Endothelial cell of umbilical vein (primary cell): ENCODE measurements at regions of chr15 and their contacts with region 1.

Region 1: DNA sequence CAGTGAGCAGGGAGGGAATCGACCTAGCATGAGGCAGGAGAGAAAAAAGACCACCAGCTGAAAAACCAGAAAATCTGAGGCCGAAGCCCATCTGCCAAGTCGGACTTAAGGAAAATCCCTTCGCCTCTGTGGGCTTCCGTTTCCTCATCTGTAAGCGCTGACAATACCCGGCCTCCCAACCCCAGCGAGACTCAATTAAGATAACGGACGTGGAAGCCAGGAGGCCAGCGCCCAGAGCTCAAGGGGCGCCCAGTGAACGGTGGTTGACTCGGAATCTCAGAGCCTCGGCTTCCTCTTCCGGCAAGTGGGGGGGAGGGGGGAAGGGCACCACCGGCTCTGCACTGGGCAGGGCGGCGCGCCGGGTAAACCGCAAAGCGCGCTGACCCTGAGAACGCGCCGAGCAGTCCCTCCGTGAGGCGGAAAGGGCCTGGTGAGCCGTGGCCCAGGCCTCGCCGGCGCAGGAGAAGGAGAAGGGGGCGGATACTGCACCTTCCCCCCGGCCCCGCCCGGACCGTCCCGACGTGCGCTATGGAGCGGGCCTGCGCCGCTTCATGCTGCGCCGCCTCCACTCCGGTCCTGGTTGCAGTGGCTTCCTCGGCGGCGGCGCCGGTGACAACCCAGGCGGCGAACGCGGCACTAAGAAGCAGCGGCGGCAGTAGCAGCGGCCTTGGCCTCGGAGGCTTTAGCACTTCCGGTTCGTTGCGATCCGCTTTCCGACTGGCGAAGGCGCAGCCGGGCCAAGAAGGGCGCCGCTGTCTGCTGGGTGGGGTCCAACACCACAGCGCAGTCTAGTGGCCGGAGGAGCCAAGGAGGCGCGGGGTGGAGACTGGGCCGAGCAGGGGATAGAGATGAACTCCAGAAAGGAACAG is at the start of gene DPP8:
- DNase-seq: peak; percentile 92
- H3K4me3 ChIP-seq: peak within 1 kb of the TSS; percentile 67 to 96 (median 92)
- H3K27ac ChIP-seq: peak within 1 kb of the TSS; percentile 70
- H3K4me1 ChIP-seq: peaks cover 19% of the 10 kb centered on the region
- H3K27me3 ChIP-seq: no peaks in the 10 kb centered on the region
- CTCF ChIP-seq: peak; percentile 98
- POLR2A ChIP-seq: peak; percentile 78
- total RNA-seq, gene DPP8: 34.2 and 35.3 TPM in 2 replicates

Region 2: GRCh38 chr15:65156692-65157091 is 360.5 kb before region 1 on chr15:
- CTCF ChIA-PET with region 1: no interaction called
- POLR2A ChIA-PET with region 1: no interaction called
- dilution Hi-C with region 1: no loop called
- intact Hi-C with region 1: no loop called
- DNase-seq: no peak
- H3K4me3 ChIP-seq: no peak overlapping the region
- H3K27ac ChIP-seq: no peak overlapping the region
- H3K4me1 ChIP-seq: no peaks in the 10 kb centered on the region
- H3K27me3 ChIP-seq: no peaks in the 10 kb centered on the region
- CTCF ChIP-seq: no peak
- POLR2A ChIP-seq: no peak

Region 3: DNA sequence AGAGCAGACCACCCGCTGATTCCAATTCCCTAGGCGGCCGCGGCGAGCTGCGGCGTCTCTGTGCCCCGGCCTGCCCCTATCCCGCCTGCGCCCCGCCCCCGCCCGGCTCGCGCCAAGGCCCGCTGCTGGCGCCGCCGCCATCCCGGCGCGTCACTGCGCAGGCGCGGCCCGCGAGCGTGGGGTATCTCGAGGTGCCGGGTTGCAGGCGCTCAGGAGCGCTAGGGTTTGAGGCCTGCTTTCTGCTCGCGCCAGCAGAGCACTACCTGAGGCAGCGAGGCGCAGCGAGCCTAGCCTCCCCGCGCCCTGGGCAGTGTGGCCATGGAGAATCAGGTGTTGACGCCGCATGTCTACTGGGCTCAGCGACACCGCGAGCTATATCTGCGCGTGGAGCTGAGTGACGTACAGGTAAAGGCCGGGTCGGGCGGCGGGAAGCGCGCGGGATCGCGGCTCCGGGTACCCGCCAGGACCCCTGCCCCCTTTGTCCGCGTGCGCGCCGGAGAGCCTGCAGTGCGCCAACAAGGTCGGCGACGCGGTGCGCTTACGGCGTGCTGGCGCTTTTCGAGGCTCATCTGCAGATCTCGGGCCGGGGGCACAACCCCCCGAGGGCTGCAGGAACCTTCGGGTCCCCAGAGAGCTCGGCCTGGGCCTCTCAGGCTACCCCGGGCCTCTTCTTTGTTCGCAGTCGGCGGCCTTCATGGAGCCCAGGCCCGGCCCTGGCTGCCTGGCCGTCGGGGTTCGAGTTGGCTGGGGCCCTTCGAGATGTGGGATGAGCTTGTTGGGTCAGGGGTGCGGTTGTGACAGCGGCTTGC is 13.3 kb after region 1 on chr15 and contains the start of gene HACD3:
- CTCF ChIA-PET with region 1: interaction called, 9 read pairs
- POLR2A ChIA-PET with region 1: interaction called, 11 read pairs
- dilution Hi-C with region 1: no loop called
- intact Hi-C with region 1: loop called (anchors 1 kb)
- DNase-seq: peak; percentile 84
- H3K4me3 ChIP-seq: peak within 1 kb of the TSS; percentile 54 to 83 (median 80)
- H3K27ac ChIP-seq: peak within 1 kb of the TSS; percentile 20
- H3K4me1 ChIP-seq: peaks cover 16% of the 10 kb centered on the region
- H3K27me3 ChIP-seq: no peaks in the 10 kb centered on the region
- CTCF ChIP-seq: no peak
- POLR2A ChIP-seq: peak; percentile 73
- total RNA-seq, gene HACD3: 61.1 and 61.9 TPM in 2 replicates

Region 4: GRCh38 chr15:65576664-65577063 is 59.4 kb after region 1 on chr15:
- CTCF ChIA-PET with region 1: interaction called, 6 read pairs
- POLR2A ChIA-PET with region 1: interaction called, 5 read pairs
- dilution Hi-C with region 1: no loop called
- intact Hi-C with region 1: loop called (anchors 1 kb)
- DNase-seq: peak; percentile 70
- H3K4me3 ChIP-seq: no peak overlapping the region
- H3K27ac ChIP-seq: peak overlapping the region; percentile 43
- H3K4me1 ChIP-seq: peaks cover 29% of the 10 kb centered on the region
- H3K27me3 ChIP-seq: no peaks in the 10 kb centered on the region
- CTCF ChIP-seq: no peak
- POLR2A ChIP-seq: no peak

Region 5: GRCh38 chr15:65610871-65611718 is 93.9 kb after region 1 on chr15 and contains the start of gene INTS14:
- CTCF ChIA-PET with region 1: no interaction called
- POLR2A ChIA-PET with region 1: no interaction called
- dilution Hi-C with region 1: no loop called
- intact Hi-C with region 1: loop called (anchors 2 kb)
- DNase-seq: peak; percentile 95
- H3K4me3 ChIP-seq: peak within 1 kb of the TSS; percentile 87 to 96 (median 96)
- H3K27ac ChIP-seq: peak within 1 kb of the TSS; percentile 84
- H3K4me1 ChIP-seq: peaks cover 20% of the 10 kb centered on the region
- H3K27me3 ChIP-seq: no peaks in the 10 kb centered on the region
- CTCF ChIP-seq: peak; percentile 60 to 71
- POLR2A ChIP-seq: peak; percentile 97
- total RNA-seq, gene INTS14: 41.7 and 44.6 TPM in 2 replicates